ENCODE measurements at regions of chr14 and their contacts with region 1.

Region 1: GRCh38 chr14:59507063-59507780 is 22.9 kb downstream of the JKAMP start:
- DNase-seq: peak; percentile 45 to 63
- ATAC-seq: peak; percentile 95
- H3K4me3 ChIP-seq: no peak overlapping the region
- H3K27ac ChIP-seq: no peak overlapping the region
- H3K4me1 ChIP-seq: no peaks in the 10 kb centered on the region
- CTCF ChIP-seq: peak; percentile 57
- EP300 ChIP-seq: no peak
- POLR2A ChIP-seq: no peak
- RAD21 ChIP-seq: peak; percentile 50 to 62; a peak in 4 of 5 replicates

Region 2: DNA sequence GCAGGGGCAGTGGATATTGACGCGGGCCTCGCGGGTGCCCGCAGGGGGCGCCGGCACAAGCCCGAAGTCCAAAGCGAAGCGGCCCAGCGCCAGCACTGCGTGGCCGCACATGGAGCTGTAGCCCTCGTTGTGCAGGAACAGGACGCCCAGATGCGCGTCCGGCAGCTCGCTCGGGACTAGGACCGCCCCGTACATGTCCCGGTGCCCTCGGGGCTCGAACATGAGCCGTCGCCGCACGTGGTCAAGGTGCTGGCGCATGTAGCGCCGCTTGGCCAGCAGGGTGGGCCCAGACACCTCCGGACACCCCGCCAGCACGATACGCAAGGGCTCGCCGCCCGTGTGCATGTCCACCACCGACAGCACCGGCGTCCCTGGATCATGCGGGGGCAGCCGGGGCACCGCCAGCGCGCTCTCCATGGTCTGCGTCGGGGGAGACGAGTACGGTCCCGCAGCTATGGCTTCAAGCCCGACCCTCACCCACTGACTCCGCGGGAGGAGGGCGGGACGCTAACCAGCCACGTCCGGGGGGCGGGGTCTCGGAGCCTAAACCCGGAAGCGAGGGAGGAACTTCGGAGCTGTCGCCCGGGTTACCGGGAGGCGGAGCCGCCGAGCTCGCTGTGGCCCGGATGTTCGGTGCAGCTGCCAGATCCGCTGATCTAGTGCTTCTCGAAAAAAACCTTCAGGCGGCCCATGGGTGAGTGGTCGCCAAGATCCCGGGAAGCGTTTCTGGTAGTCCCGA is 23.2 kb before region 1 on chr14 and contains the starts of genes JKAMP and L3HYPDH:
- CTCF ChIA-PET with region 1: interaction called, 4 read pairs
- POLR2A ChIA-PET with region 1: interaction called, 10 read pairs
- DNase-seq: peak; percentile 83 to 96
- ATAC-seq: peak; percentile 83 to 89
- H3K4me3 ChIP-seq: peak within 1 kb of the TSS; percentile 82
- H3K27ac ChIP-seq: peak within 1 kb of the TSS; percentile 98
- H3K4me1 ChIP-seq: peaks cover 39% of the 10 kb centered on the region
- CTCF ChIP-seq: peak; percentile 65
- EP300 ChIP-seq: no peak
- POLR2A ChIP-seq: peak; percentile 84
- RAD21 ChIP-seq: no peak; a peak in 1 of 5 replicates
- polyA plus RNA-seq, gene JKAMP: 254 and 266 TPM in 2 replicates
- polyA plus RNA-seq, gene L3HYPDH: 67.9 and 100.0 TPM in 2 replicates

Region 3: DNA sequence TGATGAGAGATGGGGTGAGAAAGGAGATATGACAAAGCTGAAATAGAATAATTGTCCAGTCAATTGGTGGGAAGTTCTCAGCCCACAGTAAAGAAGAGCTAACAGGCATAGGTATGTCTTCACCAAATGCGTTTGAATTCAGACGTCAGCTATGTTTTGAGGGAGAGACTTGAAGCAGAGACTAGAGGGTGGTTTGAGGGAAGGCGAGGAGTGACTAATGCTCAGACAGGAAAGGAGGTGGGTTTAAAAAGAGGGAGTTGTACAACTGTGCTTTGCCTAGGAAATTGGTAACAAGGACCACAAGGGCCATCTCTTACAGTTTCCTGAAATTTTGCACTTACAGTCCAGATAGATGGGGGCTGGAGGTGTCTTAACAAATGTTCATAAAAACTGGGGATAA is 16.5 kb before region 1 on chr14:
- CTCF ChIA-PET with region 1: interaction called, 14 read pairs
- POLR2A ChIA-PET with region 1: no interaction called
- DNase-seq: no peak
- ATAC-seq: no peak
- H3K4me3 ChIP-seq: no peak overlapping the region
- H3K27ac ChIP-seq: no peak overlapping the region
- H3K4me1 ChIP-seq: peaks cover 9% of the 10 kb centered on the region
- CTCF ChIP-seq: no peak
- EP300 ChIP-seq: no peak
- POLR2A ChIP-seq: no peak
- RAD21 ChIP-seq: no peak

Measured in A549 (cell line).